B cell (primary cell): ENCODE measurements at regions of chr17 and their contacts with region 1.

Region 1: GRCh38 chr17:76408052-76408849 is 23.8 kb downstream of the SPHK1 start:
- DNase-seq: peak; percentile 89
- ATAC-seq: peak; percentile 73
- H3K4me3 ChIP-seq: no peak overlapping the region
- H3K4me3 Mint-ChIP-seq: peak overlapping the region; percentile 26
- H3K27ac ChIP-seq: peak overlapping the region in 1 of 2 donors; percentile 43
- H3K27ac Mint-ChIP-seq: peak overlapping the region; percentile 50
- H3K4me1 ChIP-seq: peaks cover 37 to 41% of the 10 kb centered on the region in 2 donors
- H3K4me1 Mint-ChIP-seq: peaks cover 49% of the 10 kb centered on the region
- H3K27me3 ChIP-seq: no peaks in the 10 kb centered on the region
- H3K27me3 Mint-ChIP-seq: no peaks in the 10 kb centered on the region
- CTCF ChIP-seq: peak; percentile 92

Region 2: GRCh38 chr17:76318586-76318985 is 89.7 kb before region 1 on chr17:
- CTCF ChIA-PET with region 1: no interaction called
- POLR2A ChIA-PET with region 1: no interaction called
- intact Hi-C with region 1: no loop called
- DNase-seq: no peak
- ATAC-seq: no peak
- H3K4me3 ChIP-seq: no peak overlapping the region
- H3K4me3 Mint-ChIP-seq: no peak overlapping the region
- H3K27ac ChIP-seq: no peak overlapping the region
- H3K27ac Mint-ChIP-seq: no peak overlapping the region
- H3K4me1 ChIP-seq: no peaks in the 10 kb centered on the region
- H3K4me1 Mint-ChIP-seq: no peaks in the 10 kb centered on the region
- H3K27me3 ChIP-seq: no peaks in the 10 kb centered on the region
- H3K27me3 Mint-ChIP-seq: no peaks in the 10 kb centered on the region
- CTCF ChIP-seq: no peak

Region 3: DNA sequence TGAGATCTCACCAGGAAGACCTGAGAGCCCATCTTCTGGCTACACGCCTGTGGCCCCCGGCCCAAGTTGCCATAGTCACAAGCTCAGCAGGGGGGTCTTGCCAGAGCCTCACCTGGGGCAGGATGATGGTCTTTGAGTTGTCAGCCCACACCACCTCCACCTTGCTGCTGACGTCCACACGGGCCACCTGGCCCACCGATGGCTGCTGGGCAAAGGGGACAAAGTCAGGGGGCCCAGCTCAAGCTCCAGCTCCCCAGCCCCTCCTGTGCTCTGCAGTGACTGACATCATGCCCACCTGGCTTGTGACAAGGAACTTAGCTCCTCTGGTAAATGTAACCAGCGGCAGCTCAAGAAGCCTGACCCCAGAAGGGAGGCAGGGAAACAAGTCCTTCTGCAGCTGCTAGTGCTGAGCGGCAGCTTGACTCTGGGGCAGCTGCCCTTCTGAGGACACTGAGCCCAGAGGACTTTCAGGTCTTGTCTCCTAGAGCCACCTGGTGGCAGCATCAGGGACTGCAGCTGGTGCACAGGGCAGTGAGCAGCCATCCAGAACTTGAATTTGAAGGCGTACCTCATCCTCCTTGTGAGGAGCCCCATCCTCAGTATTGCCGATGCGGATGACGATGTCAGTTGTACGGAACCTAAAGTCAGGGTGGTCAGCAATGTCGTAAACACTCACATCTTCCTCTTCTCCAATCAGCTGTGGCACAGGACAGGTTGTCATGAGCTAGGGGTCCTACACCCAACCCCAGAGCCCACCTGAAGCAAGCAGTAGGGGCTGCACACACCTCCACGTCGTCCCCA is 10.4 kb before region 1 on chr17:
- CTCF ChIA-PET with region 1: interaction called, 40 read pairs
- POLR2A ChIA-PET with region 1: no interaction called
- intact Hi-C with region 1: no loop called
- DNase-seq: peak; percentile 85
- ATAC-seq: peak; percentile 95
- H3K4me3 ChIP-seq: no peak overlapping the region
- H3K4me3 Mint-ChIP-seq: no peak overlapping the region
- H3K27ac ChIP-seq: no peak overlapping the region
- H3K27ac Mint-ChIP-seq: no peak overlapping the region
- H3K4me1 ChIP-seq: no peaks in the 10 kb centered on the region
- H3K4me1 Mint-ChIP-seq: no peaks in the 10 kb centered on the region
- H3K27me3 ChIP-seq: no peaks in the 10 kb centered on the region
- H3K27me3 Mint-ChIP-seq: no peaks in the 10 kb centered on the region
- CTCF ChIP-seq: peak; percentile 97

Region 4: GRCh38 chr17:76427501-76428231 is 19.4 kb after region 1 on chr17:
- CTCF ChIA-PET with region 1: interaction called, 69 read pairs
- POLR2A ChIA-PET with region 1: interaction called, 6 read pairs
- intact Hi-C with region 1: loop called (anchors 1 kb)
- DNase-seq: peak; percentile 87
- ATAC-seq: peak; percentile 87
- H3K4me3 ChIP-seq: peak overlapping the region; percentile 6 to 49 (median 15)
- H3K4me3 Mint-ChIP-seq: peak overlapping the region; percentile 54
- H3K27ac ChIP-seq: peak overlapping the region; percentile 75 to 92
- H3K27ac Mint-ChIP-seq: peak overlapping the region; percentile 93
- H3K4me1 ChIP-seq: peaks cover 78 to 96% of the 10 kb centered on the region in 2 donors
- H3K4me1 Mint-ChIP-seq: peaks cover 73% of the 10 kb centered on the region
- H3K27me3 ChIP-seq: no peaks in the 10 kb centered on the region
- H3K27me3 Mint-ChIP-seq: no peaks in the 10 kb centered on the region
- CTCF ChIP-seq: no peak

Region 5: GRCh38 chr17:76452660-76453430 is 44.6 kb after region 1 on chr17 and contains the start of gene UBE2O:
- CTCF ChIA-PET with region 1: interaction called, 265 read pairs
- POLR2A ChIA-PET with region 1: interaction called, 11 read pairs
- intact Hi-C with region 1: loop called (anchors 1 kb)
- DNase-seq: peak; percentile 95
- ATAC-seq: peak; percentile 93
- H3K4me3 ChIP-seq: peak within 1 kb of the TSS; percentile 46 to 91 (median 72)
- H3K4me3 Mint-ChIP-seq: peak within 1 kb of the TSS; percentile 88
- H3K27ac ChIP-seq: peak within 1 kb of the TSS; percentile 46 to 77
- H3K27ac Mint-ChIP-seq: peak within 1 kb of the TSS; percentile 88
- H3K4me1 ChIP-seq: peaks cover 22 to 26% of the 10 kb centered on the region in 2 donors
- H3K4me1 Mint-ChIP-seq: peaks cover 37% of the 10 kb centered on the region
- H3K27me3 ChIP-seq: no peaks in the 10 kb centered on the region
- H3K27me3 Mint-ChIP-seq: no peaks in the 10 kb centered on the region
- CTCF ChIP-seq: peak; percentile 62
- total RNA-seq, gene UBE2O: 54.0 and 62.4 TPM in 2 replicates

Region 6: GRCh38 chr17:76467366-76467765 is 59.1 kb after region 1 on chr17 and contains the start of gene AANAT:
- CTCF ChIA-PET with region 1: interaction called, 11 read pairs
- POLR2A ChIA-PET with region 1: interaction called, 4 read pairs
- intact Hi-C with region 1: loop called (anchors 1 kb)
- DNase-seq: no peak
- ATAC-seq: no peak
- H3K4me3 ChIP-seq: no peak within 1 kb of the TSS
- H3K4me3 Mint-ChIP-seq: no peak within 1 kb of the TSS
- H3K27ac ChIP-seq: peak within 1 kb of the TSS in 1 of 2 donors; percentile 23
- H3K27ac Mint-ChIP-seq: peak within 1 kb of the TSS; percentile 84
- H3K4me1 ChIP-seq: peaks cover 12 to 36% of the 10 kb centered on the region in 2 donors
- H3K4me1 Mint-ChIP-seq: peaks cover 35% of the 10 kb centered on the region
- H3K27me3 ChIP-seq: no peaks in the 10 kb centered on the region
- H3K27me3 Mint-ChIP-seq: no peaks in the 10 kb centered on the region
- CTCF ChIP-seq: no peak
- total RNA-seq, gene AANAT: 0.94 TPM in 1 of 2 replicates, not detected in the other

Region 7: GRCh38 chr17:76506408-76507349 is 98.4 kb after region 1 on chr17:
- CTCF ChIA-PET with region 1: interaction called, 16 read pairs
- POLR2A ChIA-PET with region 1: interaction called, 3 read pairs
- intact Hi-C with region 1: loop called (anchors 1 kb)
- DNase-seq: peak; percentile 92
- ATAC-seq: peak; percentile 73
- H3K4me3 ChIP-seq: no peak overlapping the region
- H3K4me3 Mint-ChIP-seq: no peak overlapping the region
- H3K27ac ChIP-seq: no peak overlapping the region
- H3K27ac Mint-ChIP-seq: peak overlapping the region; percentile 50
- H3K4me1 ChIP-seq: peaks cover 14 to 28% of the 10 kb centered on the region in 2 donors
- H3K4me1 Mint-ChIP-seq: peaks cover 28% of the 10 kb centered on the region
- H3K27me3 ChIP-seq: no peaks in the 10 kb centered on the region
- H3K27me3 Mint-ChIP-seq: peaks cover 2% of the 10 kb centered on the region
- CTCF ChIP-seq: peak; percentile 87